ENCODE measurements at regions of chr7 and their contacts with region 1.

Region 1: GRCh38 chr7:77252506-77252905 is 52.9 kb upstream of the FGL2 start:
- DNase-seq: no peak
- H3K4me3 Mint-ChIP-seq: no peak overlapping the region
- H3K27ac Mint-ChIP-seq: no peak overlapping the region
- H3K4me1 Mint-ChIP-seq: no peaks in the 10 kb centered on the region
- H3K27me3 Mint-ChIP-seq: peaks cover 3% of the 10 kb centered on the region

Region 2: DNA sequence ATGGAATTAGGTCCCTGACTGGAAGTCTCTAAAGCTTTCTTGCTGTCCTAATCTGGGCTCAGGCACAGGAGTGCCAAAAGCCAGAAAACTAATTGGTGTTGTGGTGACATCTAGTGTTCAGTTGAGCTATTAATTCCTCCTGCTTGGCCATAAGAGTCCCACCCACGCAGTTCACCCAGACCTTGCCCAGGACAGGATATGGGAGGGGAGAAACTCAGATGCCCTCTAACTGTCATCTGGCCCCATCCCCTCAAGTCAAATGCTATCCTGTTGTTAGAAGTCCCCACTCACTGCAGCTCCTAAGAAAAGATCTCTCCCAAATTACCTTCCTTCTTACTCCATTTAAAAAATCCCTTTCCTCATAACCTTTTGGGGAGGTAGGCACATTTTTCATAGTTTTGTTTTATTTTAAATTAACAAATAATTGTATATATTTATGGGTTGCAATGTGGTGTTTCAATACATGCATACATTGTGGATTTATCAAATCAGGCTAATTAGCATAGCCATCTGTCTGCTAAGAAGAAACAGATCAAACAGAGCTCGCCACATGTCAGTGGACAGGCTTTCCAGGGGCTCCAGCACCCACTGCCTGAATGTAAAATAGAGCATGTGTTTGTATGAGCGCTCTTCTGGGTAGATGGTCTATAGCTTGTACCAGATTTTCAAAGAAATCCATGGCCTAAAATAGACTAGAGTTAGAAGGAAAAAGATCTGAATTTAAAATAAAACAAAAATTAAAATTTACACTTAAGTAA is 79.6 kb after region 1 on chr7:
- CTCF ChIA-PET with region 1: interaction called, 33 read pairs
- DNase-seq: peak; percentile 60
- H3K4me3 Mint-ChIP-seq: no peak overlapping the region
- H3K27ac Mint-ChIP-seq: no peak overlapping the region
- H3K4me1 Mint-ChIP-seq: peaks cover 52% of the 10 kb centered on the region
- H3K27me3 Mint-ChIP-seq: no peaks in the 10 kb centered on the region

Measured in activated naive CD4-positive, alpha-beta T cell treated with anti-CD3 and anti-CD28 coated beads, Interleukin-2, amount 10 ng/mL, durations not matched to agents 7 days and 5 days (primary cell).